ENCODE measurements at regions of chr1 and their contacts with region 1.

Region 1: GRCh38 chr1:27044613-27045151 is 32.0 kb upstream of the TENT5B start:
- DNase-seq: peak; percentile 70 to 99
- H3K4me3 ChIP-seq: peak overlapping the region in 3 of 4 experiments; percentile 12 to 39 (median 24); a peak in 4 of 8 replicates
- H3K27ac ChIP-seq: no peak overlapping the region
- H3K4me1 ChIP-seq: peaks cover 7 to 25% (median 12%) of the 10 kb centered on the region in 4 experiments
- H3K27me3 ChIP-seq: no peaks in the 10 kb centered on the region
- CTCF ChIP-seq: peak; percentile 94 to 100 (median 97)
- EP300 ChIP-seq: no peak
- POLR2A ChIP-seq: no peak
- RAD21 ChIP-seq: peak; percentile 99

Region 2: DNA sequence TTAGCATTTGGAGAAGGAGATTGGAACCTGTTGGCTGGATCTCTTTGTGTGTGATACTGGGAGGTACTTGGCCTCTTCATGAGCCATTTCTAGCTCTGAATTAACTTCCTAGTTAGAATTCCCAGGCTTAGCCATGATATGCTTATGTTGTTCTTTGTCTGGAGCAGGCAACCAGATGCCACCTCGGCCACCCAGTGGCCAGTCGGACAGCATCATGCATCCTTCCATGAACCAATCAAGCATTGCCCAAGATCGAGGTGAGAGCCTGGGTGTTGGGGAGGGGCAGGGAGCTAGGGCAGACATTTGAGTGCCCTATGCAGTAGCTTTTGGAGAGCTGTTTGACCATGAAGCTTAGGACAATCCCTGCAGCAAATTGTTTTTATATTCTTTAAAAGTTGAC is 283.5 kb before region 1 on chr1:
- CTCF ChIA-PET with region 1: no interaction called
- POLR2A ChIA-PET with region 1: no interaction called
- DNase-seq: no peak
- H3K4me3 ChIP-seq: no peak overlapping the region
- H3K27ac ChIP-seq: no peak overlapping the region
- H3K4me1 ChIP-seq: no peaks in the 10 kb centered on the region
- H3K27me3 ChIP-seq: no peaks in the 10 kb centered on the region
- CTCF ChIP-seq: peak in 2 of 3 experiments; percentile 4 to 26; a peak in 2 of 4 replicates
- EP300 ChIP-seq: no peak
- POLR2A ChIP-seq: no peak
- RAD21 ChIP-seq: no peak; a peak in 1 of 4 replicates

Region 3: GRCh38 chr1:27004471-27005165 is 40.1 kb before region 1 on chr1:
- CTCF ChIA-PET with region 1: interaction called, 143 read pairs
- POLR2A ChIA-PET with region 1: interaction called, 1,829 read pairs
- DNase-seq: peak in 1 of 2 experiments; percentile 74
- H3K4me3 ChIP-seq: no peak overlapping the region
- H3K27ac ChIP-seq: peak overlapping the region; percentile 93; the same call in 1 of the 2 replicates
- H3K4me1 ChIP-seq: peaks cover 32 to 70% (median 54%) of the 10 kb centered on the region in 4 experiments
- H3K27me3 ChIP-seq: no peaks in the 10 kb centered on the region
- CTCF ChIP-seq: no peak; a peak in 1 of 4 replicates
- EP300 ChIP-seq: no peak
- POLR2A ChIP-seq: peak in 1 of 2 experiments; percentile 53; a peak in 2 of 3 replicates
- RAD21 ChIP-seq: no peak

Region 4: GRCh38 chr1:27031235-27032118 is 13.2 kb before region 1 on chr1:
- CTCF ChIA-PET with region 1: interaction called, 120 read pairs
- POLR2A ChIA-PET with region 1: interaction called, 23 read pairs
- DNase-seq: peak in 1 of 2 experiments; percentile 80
- H3K4me3 ChIP-seq: peak overlapping the region; percentile 9 to 48 (median 23); a peak in 7 of 8 replicates
- H3K27ac ChIP-seq: peak overlapping the region; percentile 77
- H3K4me1 ChIP-seq: peaks cover 16 to 29% (median 19%) of the 10 kb centered on the region in 4 experiments
- H3K27me3 ChIP-seq: no peaks in the 10 kb centered on the region
- CTCF ChIP-seq: no peak
- EP300 ChIP-seq: peak; percentile 40 to 57; a peak in 1 of 3 replicates
- POLR2A ChIP-seq: peak in 1 of 2 experiments; percentile 47; a peak in 2 of 3 replicates
- RAD21 ChIP-seq: peak in 1 of 2 experiments; percentile 22; a peak in 1 of 4 replicates

Region 5: DNA sequence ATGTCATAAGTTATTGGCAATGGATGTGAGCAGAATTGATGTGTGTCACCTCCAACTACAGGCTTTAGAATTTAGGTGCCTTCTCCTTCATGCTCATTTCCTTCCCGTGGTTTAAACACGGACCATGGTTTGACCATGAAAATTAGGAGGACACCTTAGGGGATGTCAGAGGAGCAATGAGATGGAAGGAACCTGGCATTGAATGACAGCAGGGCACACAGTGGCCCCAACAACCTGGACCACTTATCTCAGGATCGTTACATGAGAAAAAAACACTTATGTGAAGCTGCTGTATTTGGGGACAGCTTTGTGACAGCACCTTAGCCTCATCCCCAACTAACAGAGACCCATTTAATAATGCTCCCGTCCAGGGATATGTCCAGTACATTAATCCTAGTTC is 39.4 kb after region 1 on chr1:
- CTCF ChIA-PET with region 1: interaction called, 790 read pairs
- POLR2A ChIA-PET with region 1: interaction called, 4 read pairs
- DNase-seq: no peak
- H3K4me3 ChIP-seq: no peak overlapping the region
- H3K27ac ChIP-seq: no peak overlapping the region
- H3K4me1 ChIP-seq: no peaks in the 10 kb centered on the region
- H3K27me3 ChIP-seq: no peaks in the 10 kb centered on the region
- CTCF ChIP-seq: no peak
- EP300 ChIP-seq: no peak
- POLR2A ChIP-seq: no peak
- RAD21 ChIP-seq: no peak

Region 6: GRCh38 chr1:27102707-27103491 is 58.2 kb after region 1 on chr1:
- CTCF ChIA-PET with region 1: interaction called, 790 read pairs
- POLR2A ChIA-PET with region 1: interaction called, 33 read pairs
- DNase-seq: peak; percentile 49 to 100
- H3K4me3 ChIP-seq: no peak overlapping the region
- H3K27ac ChIP-seq: no peak overlapping the region
- H3K4me1 ChIP-seq: peaks cover 0 to 21% (median 14%) of the 10 kb centered on the region in 4 experiments; a peak in 6 of 7 replicates
- H3K27me3 ChIP-seq: no peaks in the 10 kb centered on the region
- CTCF ChIP-seq: peak in 2 of 3 experiments; percentile 97 to 99; a peak in 3 of 4 replicates
- EP300 ChIP-seq: no peak
- POLR2A ChIP-seq: no peak
- RAD21 ChIP-seq: peak; percentile 98 to 99

Region 7: GRCh38 chr1:27300341-27301051 is 255.8 kb after region 1 on chr1:
- CTCF ChIA-PET with region 1: interaction called, 32 read pairs
- POLR2A ChIA-PET with region 1: no interaction called
- DNase-seq: peak in 1 of 2 experiments; percentile 90
- H3K4me3 ChIP-seq: no peak overlapping the region
- H3K27ac ChIP-seq: no peak overlapping the region
- H3K4me1 ChIP-seq: peaks cover 0 to 22% (median 11%) of the 10 kb centered on the region in 4 experiments; a peak in 6 of 7 replicates
- H3K27me3 ChIP-seq: no peaks in the 10 kb centered on the region
- CTCF ChIP-seq: peak; percentile 97 to 99 (median 99)
- EP300 ChIP-seq: no peak
- POLR2A ChIP-seq: no peak
- RAD21 ChIP-seq: peak; percentile 99 to 100

Region 8: GRCh38 chr1:27332536-27333281 is 288.0 kb after region 1 on chr1:
- CTCF ChIA-PET with region 1: no interaction called
- POLR2A ChIA-PET with region 1: no interaction called
- DNase-seq: peak in 1 of 2 experiments; percentile 86
- H3K4me3 ChIP-seq: no peak overlapping the region
- H3K27ac ChIP-seq: no peak overlapping the region
- H3K4me1 ChIP-seq: no peaks in the 10 kb centered on the region
- H3K27me3 ChIP-seq: no peaks in the 10 kb centered on the region
- CTCF ChIP-seq: peak; percentile 89 to 97 (median 95)
- EP300 ChIP-seq: no peak
- POLR2A ChIP-seq: no peak
- RAD21 ChIP-seq: peak; percentile 64 to 75